Posterior vena cava (tissue), 2 donors: ENCODE measurements at regions of chr2 and their contacts with region 1.

Region 1: GRCh38 chr2:233801357-233802131 is 23.4 kb downstream of the MROH2A start:
- DNase-seq: no peak

Region 2: DNA sequence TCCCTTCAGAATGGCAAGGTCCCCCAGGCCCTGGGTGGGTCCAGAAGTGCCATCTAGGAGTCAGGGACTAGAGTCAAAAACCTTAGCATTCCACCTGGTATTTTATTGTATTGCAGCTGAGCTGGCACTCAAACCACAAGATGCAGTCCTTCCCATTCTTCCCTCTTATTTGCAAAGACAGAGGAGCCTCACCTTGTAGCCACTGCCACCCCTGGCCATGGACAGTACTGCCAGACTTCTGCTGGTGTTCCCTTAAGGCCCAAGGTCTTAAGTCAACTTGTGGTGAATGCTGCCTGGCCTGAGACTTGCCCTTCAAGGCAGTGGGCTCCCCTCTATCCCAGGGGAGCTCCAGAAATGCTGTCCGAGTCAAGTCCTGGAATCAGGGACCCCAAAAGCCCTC is 158.4 kb before region 1 on chr2:
- intact Hi-C with region 1: loop called in 1 of 2 experiments (anchors 10 kb)
- DNase-seq: no peak